Gastrocnemius medialis (tissue), 4 donors: ENCODE measurements at regions of chr3 and their contacts with region 1.

Region 1: GRCh38 chr3:186108941-186109865 is at the start of gene ETV5:
- DNase-seq: peak; percentile 100
- ATAC-seq: peak; percentile 90 to 93
- H3K4me3 ChIP-seq: peak within 1 kb of the TSS; percentile 77 to 87 (median 80)
- H3K27ac ChIP-seq: peak within 1 kb of the TSS; percentile 88 to 95 (median 91)
- H3K4me1 ChIP-seq: peaks cover 18 to 23% of the 10 kb centered on the region in 2 donors
- H3K27me3 ChIP-seq: peaks cover 0 to 6% (median 3%) of the 10 kb centered on the region in 3 donors
- CTCF ChIP-seq: peak in 2 of 5 experiments; percentile 20 to 21
- POLR2A ChIP-seq: peak; percentile 86 to 95
- total RNA-seq, gene ETV5: 19.0 to 31.6 (median 21.3) TPM

Region 2: GRCh38 chr3:186241910-186242821 is 133.0 kb after region 1 on chr3:
- in situ Hi-C with region 1: no loop called
- intact Hi-C with region 1: loop called (anchors 2 kb)
- DNase-seq: peak; percentile 61 to 84
- ATAC-seq: peak; percentile 79 to 88
- H3K4me3 ChIP-seq: peak overlapping the region; percentile 30 to 59 (median 54)
- H3K27ac ChIP-seq: peak overlapping the region; percentile 85 to 88 (median 86)
- H3K4me1 ChIP-seq: peaks cover 25 to 28% of the 10 kb centered on the region in 2 donors
- H3K27me3 ChIP-seq: no peaks in the 10 kb centered on the region
- CTCF ChIP-seq: peak; percentile 54 to 71 (median 62)
- POLR2A ChIP-seq: peak in 1 of 2 donors; percentile 21

Region 3: DNA sequence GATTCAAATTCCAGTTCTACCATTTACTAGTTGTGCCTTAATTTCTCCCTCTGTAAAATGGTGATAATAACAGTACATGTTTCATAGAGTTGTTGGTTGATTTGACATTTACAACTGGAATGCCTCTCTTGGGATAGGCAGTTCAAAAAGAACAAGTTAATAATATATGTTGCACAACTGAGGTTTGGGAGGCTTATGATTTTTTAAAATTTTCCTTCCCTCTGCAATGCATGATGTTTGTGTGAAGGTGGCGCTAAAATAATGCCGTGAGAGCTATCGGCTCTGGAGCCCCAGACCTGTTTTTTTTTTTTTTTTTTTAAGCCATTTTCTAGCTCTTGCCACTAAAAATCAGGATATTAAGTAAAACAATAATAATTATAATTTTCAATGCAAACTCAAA is 479.9 kb after region 1 on chr3:
- in situ Hi-C with region 1: no loop called
- intact Hi-C with region 1: no loop called
- DNase-seq: no peak
- ATAC-seq: no peak
- H3K4me3 ChIP-seq: no peak overlapping the region
- H3K27ac ChIP-seq: no peak overlapping the region
- H3K4me1 ChIP-seq: no peaks in the 10 kb centered on the region
- H3K27me3 ChIP-seq: no peaks in the 10 kb centered on the region
- CTCF ChIP-seq: no peak
- POLR2A ChIP-seq: no peak